ENCODE measurements at regions of chr12 and their contacts with region 1.

Region 1: GRCh38 chr12:105319691-105320209 is 10.7 kb upstream of the C12orf75 start:
- DNase-seq: peak; percentile 71
- H3K4me3 Mint-ChIP-seq: no peak overlapping the region
- H3K27ac Mint-ChIP-seq: no peak overlapping the region
- H3K4me1 Mint-ChIP-seq: peaks cover 48% of the 10 kb centered on the region
- H3K27me3 Mint-ChIP-seq: no peaks in the 10 kb centered on the region

Region 2: DNA sequence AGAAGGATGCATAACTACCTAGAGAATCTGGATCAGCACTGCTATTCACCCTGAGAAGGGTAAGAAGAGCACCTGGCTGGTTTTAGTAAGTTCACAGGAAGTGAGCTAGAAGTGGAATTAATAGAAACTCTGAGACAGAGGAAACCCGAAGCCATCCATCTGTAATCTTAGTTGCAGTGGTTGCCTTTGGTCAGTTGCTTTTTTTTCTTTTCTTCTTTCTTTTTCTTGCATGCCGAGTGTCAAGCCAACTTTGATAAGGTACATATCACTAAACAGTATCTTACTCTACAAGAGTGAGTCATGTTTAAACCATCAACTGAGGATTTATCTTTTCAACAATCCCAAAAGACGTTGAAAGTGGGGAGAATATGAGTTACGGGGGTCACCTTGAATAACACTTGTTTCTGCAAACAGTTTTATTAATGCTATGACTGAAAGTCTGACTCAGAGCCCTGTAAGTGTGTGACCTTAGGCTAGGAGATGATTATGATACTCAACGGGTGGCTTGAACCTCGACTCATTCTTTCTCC is 37.5 kb after region 1 on chr12:
- intact Hi-C with region 1: loop called (anchors 5 kb)
- DNase-seq: no peak
- H3K4me3 Mint-ChIP-seq: peak overlapping the region; percentile 37
- H3K27ac Mint-ChIP-seq: peak overlapping the region; percentile 89
- H3K4me1 Mint-ChIP-seq: peaks cover 35% of the 10 kb centered on the region
- H3K27me3 Mint-ChIP-seq: no peaks in the 10 kb centered on the region

Region 3: DNA sequence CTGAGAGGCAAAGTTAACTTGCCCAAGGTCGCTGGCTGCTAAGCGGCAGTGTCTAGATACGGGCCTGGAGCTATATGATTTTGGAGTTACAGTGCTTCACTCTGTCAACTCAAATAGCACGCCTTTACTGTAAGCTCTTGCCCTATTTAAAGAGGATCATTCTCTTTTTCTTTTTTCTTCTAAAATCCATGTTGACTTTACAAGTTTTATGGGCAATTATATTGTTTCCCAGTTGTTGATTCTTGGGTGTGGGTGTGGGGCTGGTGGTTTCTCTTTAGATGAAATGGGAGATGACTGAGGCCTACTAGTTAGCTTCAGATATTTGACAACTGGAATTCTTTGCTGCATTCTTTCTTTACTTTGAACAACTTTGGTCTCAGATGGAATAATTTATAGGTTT is 81.4 kb after region 1 on chr12:
- intact Hi-C with region 1: no loop called
- DNase-seq: no peak
- H3K4me3 Mint-ChIP-seq: no peak overlapping the region
- H3K27ac Mint-ChIP-seq: no peak overlapping the region
- H3K4me1 Mint-ChIP-seq: no peaks in the 10 kb centered on the region
- H3K27me3 Mint-ChIP-seq: no peaks in the 10 kb centered on the region

Measured in activated CD4-positive, alpha-beta T cell treated with anti-CD3 and anti-CD28 coated beads, Interleukin-2, amount 10 ng/mL, durations not matched to agents 24 days and 14 days (primary cell).